ENCODE measurements at regions of chr2 and their contacts with region 1.

Region 1: DNA sequence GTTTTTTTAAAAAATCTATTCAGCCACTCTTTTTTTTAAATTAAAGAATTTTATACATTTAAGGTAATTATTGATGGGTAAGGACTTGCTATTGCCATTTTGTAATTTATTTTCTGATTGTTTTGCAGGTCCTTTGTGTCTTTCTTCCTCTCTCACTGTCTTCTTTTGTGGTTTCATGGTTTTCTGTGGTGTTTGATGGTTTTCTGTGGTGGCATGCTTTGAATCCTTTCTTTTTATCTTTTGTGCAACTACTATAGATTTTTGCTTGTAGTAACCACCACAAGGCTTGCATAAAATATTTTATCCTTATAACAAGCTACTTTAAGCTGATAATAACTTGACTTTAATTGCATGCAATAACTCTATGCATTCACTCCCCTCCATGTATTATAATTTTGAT is 31.5 kb upstream of the SLC4A10 start:
- DNase-seq: no peak
- H3K4me3 ChIP-seq: no peak overlapping the region
- H3K27ac ChIP-seq: no peak overlapping the region
- H3K4me1 ChIP-seq: no peaks in the 10 kb centered on the region
- H3K27me3 ChIP-seq: no peaks in the 10 kb centered on the region
- CTCF ChIP-seq: no peak
- POLR2A ChIP-seq: no peak

Region 2: GRCh38 chr2:162143969-162144368 is 551.3 kb after region 1 on chr2:
- intact Hi-C with region 1: loop called (anchors 5 kb)
- DNase-seq: no peak
- H3K4me3 ChIP-seq: no peak overlapping the region
- H3K27ac ChIP-seq: no peak overlapping the region
- H3K4me1 ChIP-seq: no peaks in the 10 kb centered on the region
- H3K27me3 ChIP-seq: no peaks in the 10 kb centered on the region
- CTCF ChIP-seq: no peak
- POLR2A ChIP-seq: no peak

Measured in breast epithelium (tissue), 4 donors.